ENCODE measurements at regions of chr19 and their contacts with region 1.

Region 1: DNA sequence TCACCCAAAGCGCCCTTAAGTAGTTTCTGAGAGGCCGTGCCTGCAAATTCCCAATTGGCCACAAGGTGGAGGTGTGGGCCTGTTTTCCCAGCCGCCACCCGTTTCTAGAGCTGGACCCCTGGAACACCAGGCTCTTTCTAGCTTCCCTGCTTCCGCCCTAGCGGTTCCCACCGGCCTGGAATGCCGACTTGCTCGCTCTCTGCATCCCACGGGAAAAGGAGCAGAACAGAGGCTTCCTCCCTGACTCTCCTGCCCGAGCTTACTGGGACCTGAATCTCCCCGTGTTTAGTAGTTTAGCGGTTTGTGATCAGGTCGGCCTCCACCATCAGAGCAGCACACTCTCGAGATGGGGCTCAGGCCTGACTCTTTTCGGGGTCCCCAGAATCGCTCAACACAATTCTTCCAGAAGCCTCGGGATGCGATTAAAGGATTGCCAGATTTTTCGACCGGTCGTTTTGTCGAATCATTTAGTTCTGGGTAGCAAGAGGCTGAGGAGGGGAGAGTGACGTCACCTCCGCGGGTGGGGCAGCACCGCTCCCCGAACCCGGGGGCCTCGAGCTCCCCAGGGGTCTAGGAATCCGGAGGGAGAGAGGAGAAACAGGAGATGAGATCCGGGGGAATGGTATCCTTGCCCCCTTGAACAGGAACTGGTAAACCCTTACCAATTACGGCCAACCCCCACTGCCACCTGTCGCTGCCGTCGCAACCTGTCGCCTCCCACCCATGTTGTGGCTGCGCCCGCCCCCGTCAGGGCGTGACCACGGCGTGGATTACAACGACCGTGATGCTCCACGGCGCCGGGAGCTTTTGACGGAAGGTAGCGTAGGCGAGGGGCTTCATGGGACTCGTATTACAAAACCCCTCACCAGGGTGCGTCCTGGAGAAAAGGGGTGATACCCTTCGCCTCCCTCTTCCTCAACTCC is 8.0 kb downstream of the NAPSA start:
- DNase-seq: peak; percentile 72
- H3K4me3 ChIP-seq: peak overlapping the region; percentile 24 to 54 (median 31)
- H3K27ac ChIP-seq: peak overlapping the region; percentile 19
- H3K4me1 ChIP-seq: peaks cover 7% of the 10 kb centered on the region
- H3K27me3 ChIP-seq: peaks cover 0 to under 1% of the 10 kb centered on the region in 2 experiments
- CTCF ChIP-seq: peak; percentile 77 to 83
- POLR2A ChIP-seq: no peak

Region 2: GRCh38 chr19:50252111-50252886 is 105.1 kb before region 1 on chr19:
- CTCF ChIA-PET with region 1: interaction called, 15 read pairs
- POLR2A ChIA-PET with region 1: no interaction called
- dilution Hi-C with region 1: no loop called
- intact Hi-C with region 1: loop called (anchors 2 kb)
- DNase-seq: peak; percentile 25
- H3K4me3 ChIP-seq: no peak overlapping the region
- H3K27ac ChIP-seq: no peak overlapping the region
- H3K4me1 ChIP-seq: no peaks in the 10 kb centered on the region
- H3K27me3 ChIP-seq: no peaks in the 10 kb centered on the region
- CTCF ChIP-seq: peak; percentile 60 to 82
- POLR2A ChIP-seq: no peak

Region 3: DNA sequence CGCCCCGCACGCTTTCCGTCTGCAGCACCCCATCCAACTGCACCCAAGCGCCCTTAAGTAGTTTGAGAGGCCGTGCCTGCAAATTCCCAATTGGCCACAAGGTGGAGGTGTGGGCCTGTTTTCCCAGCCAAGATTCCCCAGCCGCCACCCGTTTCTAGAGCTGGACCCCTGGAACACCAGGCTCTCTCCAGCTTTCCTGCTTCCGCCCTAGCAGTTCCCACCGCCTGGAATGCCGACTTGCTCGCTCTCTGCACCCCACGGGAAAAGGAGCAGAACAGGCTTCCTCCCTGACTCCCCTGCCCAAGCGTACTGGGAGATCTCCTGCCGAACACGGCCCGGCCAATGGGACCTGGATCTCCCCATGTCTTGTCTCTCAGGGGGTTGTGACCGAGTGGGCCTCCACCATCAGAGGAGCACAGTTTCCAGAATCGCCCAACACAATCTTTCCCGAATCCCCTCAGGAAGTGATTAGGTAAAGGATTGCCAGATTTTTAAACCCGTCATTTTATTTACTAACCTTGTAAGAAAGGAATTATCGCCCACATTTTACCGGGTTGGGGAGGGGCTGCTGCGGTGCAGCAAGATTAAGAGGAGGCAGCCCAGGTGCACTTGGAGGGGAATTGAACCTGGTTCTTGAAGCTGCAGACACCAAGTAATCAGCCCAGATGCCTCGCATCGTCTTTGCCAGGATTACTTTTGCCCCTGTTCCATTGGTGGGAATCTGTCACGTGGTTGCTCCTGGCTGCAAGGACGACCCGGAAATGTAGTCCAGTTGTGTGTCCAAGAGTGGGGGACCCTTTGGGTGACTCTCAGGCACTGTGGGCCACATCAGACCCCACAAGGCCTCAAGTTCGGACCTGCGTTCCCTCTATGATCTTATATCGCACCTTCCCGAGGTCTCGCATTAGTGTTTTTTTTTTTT is 11.5 kb after region 1 on chr19:
- CTCF ChIA-PET with region 1: interaction called, 30 read pairs
- POLR2A ChIA-PET with region 1: no interaction called
- dilution Hi-C with region 1: no loop called
- intact Hi-C with region 1: loop called (anchors 1 kb)
- DNase-seq: peak; percentile 80
- H3K4me3 ChIP-seq: peak overlapping the region; percentile 20 to 53 (median 42)
- H3K27ac ChIP-seq: peak overlapping the region; percentile 19
- H3K4me1 ChIP-seq: peaks cover 5% of the 10 kb centered on the region
- H3K27me3 ChIP-seq: no peaks in the 10 kb centered on the region
- CTCF ChIP-seq: peak; percentile 71 to 84
- POLR2A ChIP-seq: no peak

Region 4: GRCh38 chr19:50414864-50415660 is 57.6 kb after region 1 on chr19:
- CTCF ChIA-PET with region 1: interaction called, 14 read pairs
- POLR2A ChIA-PET with region 1: no interaction called
- dilution Hi-C with region 1: no loop called
- intact Hi-C with region 1: loop called (anchors 1 kb)
- DNase-seq: peak; percentile 60
- H3K4me3 ChIP-seq: no peak overlapping the region
- H3K27ac ChIP-seq: no peak overlapping the region
- H3K4me1 ChIP-seq: no peaks in the 10 kb centered on the region
- H3K27me3 ChIP-seq: peaks cover 15 to 18% of the 10 kb centered on the region in 2 experiments
- CTCF ChIP-seq: peak; percentile 87 to 98
- POLR2A ChIP-seq: no peak

Region 5: GRCh38 chr19:50476224-50476942 is 118.9 kb after region 1 on chr19 and contains the starts of genes EMC10 and GARIN5A:
- CTCF ChIA-PET with region 1: interaction called, 8 read pairs
- POLR2A ChIA-PET with region 1: no interaction called
- dilution Hi-C with region 1: no loop called
- intact Hi-C with region 1: loop called (anchors 1 kb)
- DNase-seq: peak; percentile 94
- H3K4me3 ChIP-seq: peak within 1 kb of the TSS; percentile 84 to 98 (median 87)
- H3K27ac ChIP-seq: peak within 1 kb of the TSS; percentile 48
- H3K4me1 ChIP-seq: peaks cover 7% of the 10 kb centered on the region
- H3K27me3 ChIP-seq: no peaks in the 10 kb centered on the region
- CTCF ChIP-seq: no peak
- POLR2A ChIP-seq: peak; percentile 96
- total RNA-seq, gene EMC10: 101 and 106 TPM in 2 replicates
- total RNA-seq, gene GARIN5A: 0.44 and 0.62 TPM in 2 replicates

Region 6: DNA sequence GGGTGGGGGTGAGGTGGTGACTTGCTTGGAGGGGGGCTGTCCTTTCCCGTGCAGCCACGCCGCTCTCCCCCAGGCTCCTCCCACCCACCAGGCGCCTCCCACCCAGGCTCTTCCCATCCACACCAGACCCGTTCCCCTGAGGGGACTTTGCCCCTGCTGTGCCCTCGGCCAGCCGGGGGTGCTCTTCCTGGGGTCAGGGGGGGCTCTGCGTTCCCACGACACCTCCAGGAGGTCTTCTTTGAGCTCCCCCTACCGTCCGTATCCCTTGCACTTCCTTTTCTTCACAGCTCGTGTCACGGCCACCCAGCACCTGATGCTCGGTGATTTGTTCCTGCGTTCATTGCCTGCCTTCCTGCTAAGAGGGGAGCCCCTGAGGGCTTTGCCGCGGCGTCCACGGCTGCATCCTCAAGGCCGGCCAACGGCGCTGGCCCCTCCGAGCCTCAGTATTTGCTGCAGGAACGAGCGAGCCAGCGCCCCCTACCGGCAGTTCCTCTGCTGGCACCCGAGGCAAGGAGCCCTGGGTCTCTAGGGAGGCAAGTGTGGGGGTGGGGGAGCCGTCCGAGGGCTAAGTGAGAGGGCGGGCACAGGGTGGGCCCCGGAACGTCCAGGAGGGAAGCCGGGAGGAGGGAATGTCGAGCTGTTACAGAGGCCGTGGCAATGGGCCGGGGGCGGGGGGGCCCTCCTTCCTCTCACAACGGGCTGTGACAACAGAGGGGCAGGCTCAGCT is 199.0 kb after region 1 on chr19:
- CTCF ChIA-PET with region 1: interaction called, 13 read pairs
- POLR2A ChIA-PET with region 1: no interaction called
- dilution Hi-C with region 1: no loop called
- intact Hi-C with region 1: loop called (anchors 1 kb)
- DNase-seq: peak; percentile 67
- H3K4me3 ChIP-seq: peak overlapping the region; percentile 35 to 69 (median 43)
- H3K27ac ChIP-seq: no peak overlapping the region
- H3K4me1 ChIP-seq: peaks cover 3% of the 10 kb centered on the region
- H3K27me3 ChIP-seq: peaks cover 3% of the 10 kb centered on the region in 2 experiments
- CTCF ChIP-seq: peak; percentile 93 to 94
- POLR2A ChIP-seq: no peak

Measured in endothelial cell of umbilical vein (primary cell).